ENCODE measurements at regions of chr3 and their contacts with region 1.

Region 1: GRCh38 chr3:101849051-101849720 is at the start of gene NFKBIZ:
- DNase-seq: peak; percentile 89 to 96 (median 91)
- H3K4me3 ChIP-seq: peak within 1 kb of the TSS; percentile 70 to 100
- H3K4me3 Mint-ChIP-seq: peak within 1 kb of the TSS; percentile 93 to 100 (median 98)
- H3K27ac ChIP-seq: peak within 1 kb of the TSS; percentile 99
- H3K27ac Mint-ChIP-seq: peak within 1 kb of the TSS; percentile 97 to 100 (median 99)
- H3K4me1 ChIP-seq: peaks cover 33% of the 10 kb centered on the region
- H3K4me1 Mint-ChIP-seq: peaks cover 26 to 56% (median 35%) of the 10 kb centered on the region in 4 donors
- H3K27me3 ChIP-seq: no peaks in the 10 kb centered on the region
- H3K27me3 Mint-ChIP-seq: no peaks in the 10 kb centered on the region
- total RNA-seq, gene NFKBIZ: 75.9 to 79.5 TPM

Region 2: DNA sequence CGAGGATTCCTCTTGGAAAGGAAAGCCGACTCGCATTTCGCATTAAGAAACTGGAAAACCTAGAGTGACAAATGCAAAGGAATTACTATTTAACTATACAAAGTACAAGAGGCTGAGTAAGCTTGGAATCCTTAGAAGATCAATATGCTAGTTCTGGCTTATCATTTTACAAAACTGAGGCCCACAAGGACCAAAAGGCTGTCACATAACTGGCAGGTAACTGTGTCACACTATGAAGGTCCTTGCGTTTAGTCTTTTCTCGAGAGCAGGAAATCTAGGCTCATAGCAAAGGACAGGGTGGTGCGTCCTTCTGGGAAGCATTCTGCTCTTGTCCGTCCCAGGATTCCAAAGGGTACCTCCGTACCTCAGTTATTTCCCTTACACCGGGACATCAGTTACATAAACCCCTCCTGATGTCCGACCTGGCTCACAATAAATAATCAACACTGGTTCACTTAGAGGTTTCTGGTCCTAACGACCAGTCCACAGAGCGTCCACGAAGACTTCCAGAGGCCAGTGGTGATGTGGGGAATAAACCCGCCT is 163.2 kb before region 1 on chr3:
- CTCF ChIA-PET with region 1: interaction called, 3 read pairs
- POLR2A ChIA-PET with region 1: interaction called, 25 read pairs
- intact Hi-C with region 1: loop called (anchors 2 kb)
- DNase-seq: no peak
- H3K4me3 ChIP-seq: peak overlapping the region; percentile 73 to 97
- H3K4me3 Mint-ChIP-seq: peak overlapping the region; percentile 99 to 100 (median 100)
- H3K27ac ChIP-seq: peak overlapping the region; percentile 90
- H3K27ac Mint-ChIP-seq: peak overlapping the region; percentile 98 to 100 (median 99)
- H3K4me1 ChIP-seq: peaks cover 42% of the 10 kb centered on the region
- H3K4me1 Mint-ChIP-seq: peaks cover 20 to 53% (median 33%) of the 10 kb centered on the region in 4 donors
- H3K27me3 ChIP-seq: no peaks in the 10 kb centered on the region
- H3K27me3 Mint-ChIP-seq: no peaks in the 10 kb centered on the region

Region 3: GRCh38 chr3:101809178-101810021 is 39.8 kb before region 1 on chr3:
- CTCF ChIA-PET with region 1: interaction called, 17 read pairs
- POLR2A ChIA-PET with region 1: interaction called, 26 read pairs
- intact Hi-C with region 1: loop called (anchors 2 kb)
- DNase-seq: peak; percentile 49 to 60 (median 55)
- H3K4me3 ChIP-seq: no peak overlapping the region
- H3K4me3 Mint-ChIP-seq: peak overlapping the region in 6 of 8 donors; percentile 22 to 43 (median 34)
- H3K27ac ChIP-seq: peak overlapping the region; percentile 29
- H3K27ac Mint-ChIP-seq: peak overlapping the region; percentile 43 to 90 (median 83)
- H3K4me1 ChIP-seq: peaks cover 28% of the 10 kb centered on the region
- H3K4me1 Mint-ChIP-seq: peaks cover 25 to 47% (median 30%) of the 10 kb centered on the region in 4 donors
- H3K27me3 ChIP-seq: no peaks in the 10 kb centered on the region
- H3K27me3 Mint-ChIP-seq: no peaks in the 10 kb centered on the region

Region 4: DNA sequence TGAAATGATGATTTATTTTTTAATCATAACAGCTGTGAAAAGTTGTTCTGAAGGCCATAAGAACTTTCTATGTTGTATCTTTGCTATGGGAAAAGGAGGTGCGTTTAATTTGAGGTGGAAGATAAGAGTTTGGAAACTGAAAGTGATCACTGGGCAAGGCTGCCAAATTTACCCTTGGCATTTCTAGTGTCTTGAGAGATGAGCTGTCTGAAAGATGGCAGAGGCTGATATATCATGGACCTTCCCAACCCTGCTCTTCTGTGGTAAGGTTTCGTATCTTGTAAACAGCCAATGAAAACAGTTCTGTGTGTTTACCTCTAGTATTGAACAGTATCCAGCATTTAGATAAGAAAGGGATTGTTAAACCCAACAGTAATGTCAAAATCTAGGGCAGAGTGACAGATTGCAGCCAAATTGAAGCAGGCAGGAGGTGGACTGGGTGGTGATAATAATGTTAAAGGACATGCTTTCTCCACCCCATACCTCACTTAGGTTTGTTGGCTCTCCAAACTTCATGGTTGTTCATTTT is 15.7 kb before region 1 on chr3:
- CTCF ChIA-PET with region 1: interaction called, 12 read pairs
- POLR2A ChIA-PET with region 1: interaction called, 213 read pairs
- intact Hi-C with region 1: no loop called
- DNase-seq: no peak
- H3K4me3 ChIP-seq: no peak overlapping the region
- H3K4me3 Mint-ChIP-seq: peak overlapping the region in 5 of 8 donors; percentile 5 to 55 (median 37)
- H3K27ac ChIP-seq: no peak overlapping the region
- H3K27ac Mint-ChIP-seq: peak overlapping the region; percentile 1 to 76 (median 55)
- H3K4me1 ChIP-seq: peaks cover 32% of the 10 kb centered on the region
- H3K4me1 Mint-ChIP-seq: peaks cover 36 to 62% (median 46%) of the 10 kb centered on the region in 4 donors
- H3K27me3 ChIP-seq: no peaks in the 10 kb centered on the region
- H3K27me3 Mint-ChIP-seq: no peaks in the 10 kb centered on the region

Region 5: GRCh38 chr3:101925573-101925972 is 76.4 kb after region 1 on chr3:
- CTCF ChIA-PET with region 1: no interaction called
- POLR2A ChIA-PET with region 1: interaction called, 12 read pairs
- intact Hi-C with region 1: no loop called
- DNase-seq: no peak
- H3K4me3 ChIP-seq: no peak overlapping the region
- H3K4me3 Mint-ChIP-seq: peak overlapping the region in 2 of 8 donors; percentile 32 to 46
- H3K27ac ChIP-seq: no peak overlapping the region
- H3K27ac Mint-ChIP-seq: peak overlapping the region in 1 of 7 donors; percentile 21
- H3K4me1 ChIP-seq: peaks cover 17% of the 10 kb centered on the region
- H3K4me1 Mint-ChIP-seq: peaks cover 9 to 22% (median 13%) of the 10 kb centered on the region in 4 donors
- H3K27me3 ChIP-seq: no peaks in the 10 kb centered on the region
- H3K27me3 Mint-ChIP-seq: peaks cover 0 to 2% of the 10 kb centered on the region in 2 donors

Region 6: GRCh38 chr3:102085431-102086176 is 236.4 kb after region 1 on chr3:
- CTCF ChIA-PET with region 1: no interaction called
- POLR2A ChIA-PET with region 1: no interaction called
- intact Hi-C with region 1: no loop called
- DNase-seq: no peak
- H3K4me3 ChIP-seq: no peak overlapping the region
- H3K4me3 Mint-ChIP-seq: no peak overlapping the region
- H3K27ac ChIP-seq: no peak overlapping the region
- H3K27ac Mint-ChIP-seq: no peak overlapping the region
- H3K4me1 ChIP-seq: no peaks in the 10 kb centered on the region
- H3K4me1 Mint-ChIP-seq: peaks cover 0 to 6% (median 4%) of the 10 kb centered on the region in 4 donors
- H3K27me3 ChIP-seq: no peaks in the 10 kb centered on the region
- H3K27me3 Mint-ChIP-seq: peaks cover 2 to 3% of the 10 kb centered on the region in 2 donors

Region 7: GRCh38 chr3:102229062-102229655 is 380.0 kb after region 1 on chr3:
- CTCF ChIA-PET with region 1: interaction called, 13 read pairs
- POLR2A ChIA-PET with region 1: interaction called, 11 read pairs
- intact Hi-C with region 1: loop called (anchors 1 kb)
- DNase-seq: peak; percentile 65 to 77 (median 73)
- H3K4me3 ChIP-seq: no peak overlapping the region
- H3K4me3 Mint-ChIP-seq: peak overlapping the region in 1 of 8 donors; percentile 7
- H3K27ac ChIP-seq: no peak overlapping the region
- H3K27ac Mint-ChIP-seq: no peak overlapping the region
- H3K4me1 ChIP-seq: no peaks in the 10 kb centered on the region
- H3K4me1 Mint-ChIP-seq: peaks cover 3 to 12% (median 8%) of the 10 kb centered on the region in 4 donors
- H3K27me3 ChIP-seq: no peaks in the 10 kb centered on the region
- H3K27me3 Mint-ChIP-seq: peaks cover 0 to 2% of the 10 kb centered on the region in 2 donors